Activated B cell treated with CpG ODN at 0.5 μM for 24 hours (primary cell): ENCODE measurements at regions of chr1 and their contacts with region 1.

Region 1: GRCh38 chr1:23613191-23614031 is 54.1 kb upstream of the ID3 start:
- DNase-seq: peak; percentile 44
- ATAC-seq: peak; percentile 38
- H3K4me3 Mint-ChIP-seq: no peak overlapping the region
- H3K27ac Mint-ChIP-seq: peak overlapping the region; percentile 92
- H3K4me1 Mint-ChIP-seq: peaks cover 85% of the 10 kb centered on the region
- H3K27me3 Mint-ChIP-seq: no peaks in the 10 kb centered on the region
- CTCF ChIP-seq: no peak

Region 2: GRCh38 chr1:23627069-23627735 is 13.8 kb after region 1 on chr1:
- CTCF ChIA-PET with region 1: interaction called, 6 read pairs
- POLR2A ChIA-PET with region 1: interaction called, 20 read pairs
- intact Hi-C with region 1: no loop called
- DNase-seq: no peak
- ATAC-seq: peak; percentile 14
- H3K4me3 Mint-ChIP-seq: peak overlapping the region; percentile 65
- H3K27ac Mint-ChIP-seq: peak overlapping the region; percentile 84
- H3K4me1 Mint-ChIP-seq: peaks cover 81% of the 10 kb centered on the region
- H3K27me3 Mint-ChIP-seq: no peaks in the 10 kb centered on the region
- CTCF ChIP-seq: no peak